KBM-7 (cell line): ENCODE measurements at regions of chr3 and their contacts with region 1.

Region 1: GRCh38 chr3:113947372-113948014 is at the start of gene ZDHHC23:
- DNase-seq: peak; percentile 57

Region 2: DNA sequence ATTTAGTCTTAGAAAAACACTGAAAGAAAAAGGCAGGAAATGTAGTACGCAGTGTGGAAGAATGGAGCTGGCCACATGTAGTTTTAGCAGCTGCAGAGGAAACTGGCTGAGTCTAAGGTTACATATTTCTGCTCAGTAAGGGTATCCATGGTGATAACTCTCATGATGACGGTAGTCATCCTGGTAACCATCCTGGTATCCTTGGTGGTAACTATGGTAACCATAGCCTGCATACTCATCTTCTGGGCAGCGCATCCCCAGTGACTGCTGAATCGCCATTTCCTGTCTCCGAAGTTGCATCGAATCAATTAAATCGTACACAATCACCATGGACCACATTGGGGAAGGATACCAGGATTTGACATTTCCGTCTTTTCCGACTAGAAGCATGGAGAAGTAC is 1342.2 kb before region 1 on chr3:
- in situ Hi-C with region 1: loop called (anchors 25 kb)
- DNase-seq: peak; percentile 4

Region 3: DNA sequence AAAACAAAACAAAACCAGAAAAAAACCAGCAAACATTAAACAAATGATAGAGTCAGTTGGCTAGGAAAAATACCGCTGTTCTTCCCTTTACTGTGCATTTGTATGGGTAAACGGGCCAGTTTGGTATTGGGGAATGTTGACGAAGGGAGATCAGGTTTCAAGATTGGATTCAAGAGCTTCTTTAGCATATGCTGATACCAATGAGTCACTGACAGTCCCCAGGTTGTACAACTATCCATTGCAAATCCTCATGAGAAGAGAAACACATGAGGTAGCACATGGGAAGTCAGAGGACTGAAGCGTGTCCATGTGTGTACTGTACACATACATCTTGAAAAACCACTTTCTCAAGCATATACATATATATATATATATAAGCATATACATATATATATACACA is 372.0 kb after region 1 on chr3:
- in situ Hi-C with region 1: no loop called
- DNase-seq: no peak

Region 4: GRCh38 chr3:114627770-114628169 is 680.3 kb after region 1 on chr3:
- in situ Hi-C with region 1: no loop called
- DNase-seq: no peak